ENCODE measurements at regions of chr2 and their contacts with region 1.

Region 1: GRCh38 chr2:56191683-56192082 is 7.9 kb downstream of the CCDC85A start:
- DNase-seq: peak; percentile 68
- H3K4me3 Mint-ChIP-seq: no peak overlapping the region
- H3K27ac Mint-ChIP-seq: no peak overlapping the region
- H3K4me1 Mint-ChIP-seq: peaks cover 4% of the 10 kb centered on the region
- H3K27me3 Mint-ChIP-seq: no peaks in the 10 kb centered on the region
- CTCF ChIP-seq: peak; percentile 77

Region 2: DNA sequence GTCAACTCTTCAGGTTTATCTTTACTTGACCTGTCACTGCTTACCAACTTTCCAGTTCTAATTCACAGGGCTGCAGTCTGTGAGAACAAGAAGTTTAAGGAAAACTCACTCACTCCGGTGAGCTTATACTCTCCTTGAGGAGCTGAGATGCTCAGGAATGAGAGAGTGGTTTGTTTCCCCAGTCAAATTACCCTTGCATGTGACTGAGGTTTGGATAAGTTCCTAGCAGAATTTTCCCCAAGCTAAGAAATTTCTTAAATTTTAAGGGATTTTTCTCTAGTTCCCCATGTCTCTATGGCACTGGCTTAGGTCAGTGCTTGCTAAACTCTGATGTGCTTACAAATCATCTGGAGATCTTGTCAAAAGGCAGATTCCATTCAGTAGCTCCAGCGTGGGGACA is 20.7 kb before region 1 on chr2:
- CTCF ChIA-PET with region 1: no interaction called
- POLR2A ChIA-PET with region 1: no interaction called
- intact Hi-C with region 1: no loop called
- DNase-seq: no peak
- H3K4me3 Mint-ChIP-seq: no peak overlapping the region
- H3K27ac Mint-ChIP-seq: no peak overlapping the region
- H3K4me1 Mint-ChIP-seq: peaks cover 11% of the 10 kb centered on the region
- H3K27me3 Mint-ChIP-seq: no peaks in the 10 kb centered on the region
- CTCF ChIP-seq: no peak

Region 3: GRCh38 chr2:56224316-56224715 is 32.6 kb after region 1 on chr2:
- CTCF ChIA-PET with region 1: no interaction called
- POLR2A ChIA-PET with region 1: no interaction called
- intact Hi-C with region 1: no loop called
- DNase-seq: peak; percentile 8
- H3K4me3 Mint-ChIP-seq: no peak overlapping the region
- H3K27ac Mint-ChIP-seq: no peak overlapping the region
- H3K4me1 Mint-ChIP-seq: peaks cover 8% of the 10 kb centered on the region
- H3K27me3 Mint-ChIP-seq: no peaks in the 10 kb centered on the region
- CTCF ChIP-seq: no peak

Region 4: DNA sequence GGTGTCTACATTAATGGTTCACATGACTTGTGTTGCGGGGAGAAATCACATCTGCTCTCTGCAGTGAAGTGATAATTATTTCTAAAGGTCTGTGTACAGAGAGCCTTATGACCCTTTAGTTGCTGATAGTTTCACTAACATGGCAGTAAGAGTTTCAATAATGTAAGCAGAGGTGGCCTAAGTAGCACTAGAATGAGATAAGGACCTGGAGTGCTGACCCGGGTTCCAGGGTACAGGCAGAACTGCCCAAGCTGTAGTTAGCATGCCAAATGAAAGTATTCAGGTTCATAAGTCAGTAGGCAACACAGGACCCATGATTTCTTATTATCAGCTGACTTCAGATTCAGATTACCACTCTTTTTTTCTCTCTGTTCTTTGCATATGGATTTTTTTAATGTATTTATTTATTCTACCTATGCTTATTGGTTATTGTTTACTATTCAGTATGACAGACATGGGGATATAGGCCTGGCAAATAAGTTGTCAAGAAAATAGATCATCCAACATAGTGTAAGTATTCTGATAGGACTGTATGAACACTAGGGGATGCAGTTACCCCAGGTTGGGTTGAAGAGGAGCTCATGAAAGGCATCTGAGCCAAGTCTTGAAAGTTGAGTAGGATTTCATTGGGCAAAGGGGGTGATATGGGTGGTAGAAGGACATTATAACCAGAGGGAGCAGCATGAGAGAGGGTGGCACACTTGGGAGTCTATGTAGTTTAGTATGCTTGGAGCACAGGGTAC is 97.3 kb after region 1 on chr2:
- CTCF ChIA-PET with region 1: no interaction called
- POLR2A ChIA-PET with region 1: no interaction called
- intact Hi-C with region 1: loop called (anchors 10 kb)
- DNase-seq: no peak
- H3K4me3 Mint-ChIP-seq: no peak overlapping the region
- H3K27ac Mint-ChIP-seq: no peak overlapping the region
- H3K4me1 Mint-ChIP-seq: peaks cover 9% of the 10 kb centered on the region
- H3K27me3 Mint-ChIP-seq: no peaks in the 10 kb centered on the region
- CTCF ChIP-seq: no peak

Region 5: DNA sequence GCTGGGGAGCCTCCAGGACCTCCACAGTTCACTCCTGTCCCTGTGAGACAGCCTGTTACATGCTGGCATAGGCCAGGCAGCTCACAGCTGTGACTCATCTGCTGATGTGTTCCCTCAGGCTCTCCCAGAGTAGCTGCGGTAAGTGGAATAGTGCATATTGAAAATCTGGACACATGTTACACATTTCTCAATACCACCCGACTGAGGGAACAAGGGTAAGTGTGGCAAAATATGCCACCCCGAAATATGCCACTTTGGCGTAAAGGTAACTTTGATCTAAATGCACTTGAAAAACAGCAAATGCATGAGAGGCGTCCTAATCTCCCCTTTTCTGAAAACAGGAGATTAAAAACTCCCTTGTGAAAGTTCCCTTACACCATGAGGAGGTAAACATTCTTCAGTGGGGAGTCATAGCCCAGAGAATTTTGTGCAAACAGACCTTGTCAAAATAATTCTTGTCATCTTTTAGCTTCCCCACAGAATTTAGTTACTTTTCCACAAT is 550.0 kb after region 1 on chr2:
- CTCF ChIA-PET with region 1: interaction called, 14 read pairs
- POLR2A ChIA-PET with region 1: interaction called, 3 read pairs
- intact Hi-C with region 1: no loop called
- DNase-seq: peak; percentile 95
- H3K4me3 Mint-ChIP-seq: peak overlapping the region; percentile 63
- H3K27ac Mint-ChIP-seq: peak overlapping the region; percentile 96
- H3K4me1 Mint-ChIP-seq: peaks cover 28% of the 10 kb centered on the region
- H3K27me3 Mint-ChIP-seq: no peaks in the 10 kb centered on the region
- CTCF ChIP-seq: no peak

Region 6: DNA sequence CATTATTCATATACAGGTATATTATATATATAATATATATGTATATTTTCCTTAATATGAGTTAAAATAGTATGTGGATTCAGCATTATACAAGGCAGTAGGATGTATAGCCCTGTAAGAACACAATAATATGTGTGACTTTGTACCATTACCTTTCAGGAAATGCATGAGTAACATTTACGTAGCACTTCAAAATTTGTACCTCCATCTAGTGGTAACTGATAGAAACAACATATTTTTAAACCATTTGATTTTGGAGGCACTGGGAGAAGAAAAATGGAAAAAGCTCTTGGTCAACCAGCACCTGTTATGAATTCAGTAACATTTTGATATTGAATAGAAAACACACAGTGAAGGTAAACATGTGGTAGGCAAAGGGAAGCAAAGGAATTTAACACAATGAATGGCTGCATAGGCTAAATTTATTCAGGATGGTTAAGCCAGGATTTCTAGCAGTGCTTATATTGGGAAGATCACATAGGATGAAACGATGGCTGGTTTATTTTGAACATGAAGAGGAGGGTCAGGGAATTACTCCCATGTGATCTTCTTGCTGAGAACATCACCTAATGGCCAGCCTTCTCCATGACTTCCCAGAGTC is 557.6 kb after region 1 on chr2:
- CTCF ChIA-PET with region 1: interaction called, 31 read pairs
- POLR2A ChIA-PET with region 1: no interaction called
- intact Hi-C with region 1: loop called (anchors 1 kb)
- DNase-seq: peak; percentile 44
- H3K4me3 Mint-ChIP-seq: no peak overlapping the region
- H3K27ac Mint-ChIP-seq: no peak overlapping the region
- H3K4me1 Mint-ChIP-seq: no peaks in the 10 kb centered on the region
- H3K27me3 Mint-ChIP-seq: no peaks in the 10 kb centered on the region
- CTCF ChIP-seq: peak; percentile 40

Measured in MCF 10A (cell line).